Dorsolateral prefrontal cortex (tissue), 120 donors: ENCODE measurements at regions of chr17 and their contacts with region 1.

Region 1: DNA sequence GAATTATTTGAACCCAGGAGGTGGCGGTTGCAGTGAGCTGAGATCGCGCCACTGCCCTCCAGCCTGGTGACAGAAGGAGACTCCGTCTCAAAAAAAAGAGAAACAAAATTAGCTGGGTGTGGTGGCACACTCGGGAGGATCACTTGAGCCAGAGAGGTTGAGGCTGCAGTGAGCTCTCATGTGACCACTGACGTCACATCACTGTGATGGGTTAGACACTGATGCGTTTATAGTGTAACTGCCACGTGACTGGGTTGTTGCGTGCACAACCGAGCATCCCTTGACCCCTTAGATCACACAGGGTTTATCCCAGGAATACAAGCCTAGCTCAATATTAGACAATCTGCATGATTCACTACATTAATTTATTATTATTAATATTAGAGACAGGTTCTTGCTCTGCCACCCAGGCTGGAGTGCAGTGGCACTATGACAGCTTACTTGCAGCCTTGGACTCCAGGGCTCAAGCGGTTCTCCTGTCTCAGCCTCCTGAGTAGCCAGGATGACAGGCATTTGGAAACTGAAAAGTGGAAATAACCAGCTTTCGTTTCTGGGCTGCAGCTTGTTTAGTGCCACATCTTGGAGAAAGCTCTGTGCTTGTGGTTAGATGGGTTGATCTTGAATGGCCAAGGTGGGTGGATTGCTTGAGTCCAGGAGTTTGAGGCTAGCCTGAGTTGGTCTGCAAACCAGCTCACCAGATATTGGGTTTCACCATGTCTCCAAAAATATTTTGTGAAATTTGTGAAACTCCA is 26.4 kb upstream of the ABR start:
- DNase-seq: no peak
- H3K4me3 ChIP-seq: no peak overlapping the region
- H3K27ac ChIP-seq: peak overlapping the region in 2 of 59 donors; percentile 19 to 49
- H3K27me3 ChIP-seq: peaks cover 0 to 9% (median 0%) of the 10 kb centered on the region in 45 donors
- CTCF ChIP-seq: no peak

Region 2: GRCh38 chr17:1108861-1109605 is 97.2 kb before region 1 on chr17:
- intact Hi-C with region 1: no loop called
- DNase-seq: peak in 2 of 10 donors; percentile 24 to 62
- H3K4me3 ChIP-seq: peak overlapping the region; percentile 4 to 74 (median 58)
- H3K27ac ChIP-seq: peak overlapping the region in 58 of 59 donors; percentile 33 to 94 (median 84)
- H3K27me3 ChIP-seq: peaks cover 0 to 33% (median 0%) of the 10 kb centered on the region in 45 donors
- CTCF ChIP-seq: no peak

Region 3: DNA sequence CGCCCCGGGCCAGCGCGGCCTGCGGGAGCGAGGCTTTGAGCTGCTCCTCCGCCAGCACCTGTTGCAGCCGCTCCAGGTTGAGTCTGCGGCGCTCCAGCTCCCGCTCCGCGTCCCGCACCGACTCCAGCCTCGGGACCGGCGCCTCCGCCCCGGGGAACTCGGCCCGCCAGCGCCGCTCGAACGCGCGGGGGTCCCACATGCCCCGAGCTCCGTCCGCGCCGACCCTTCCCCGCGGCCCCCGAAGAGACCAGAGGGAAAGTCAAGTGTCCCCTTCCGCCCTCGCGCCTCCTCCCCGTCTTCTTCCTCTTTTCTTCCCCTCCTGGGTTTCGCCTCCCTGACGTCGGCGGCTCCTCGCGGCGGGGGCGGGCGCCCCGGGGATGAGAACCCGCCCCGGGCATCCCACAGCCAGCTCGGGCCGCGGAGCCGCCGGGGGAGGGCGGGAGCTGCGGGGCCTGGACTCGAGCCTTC is 23.3 kb after region 1 on chr17:
- intact Hi-C with region 1: loop called in 1 of 2 experiments (anchors 2 kb)
- DNase-seq: peak in 4 of 10 donors; percentile 16 to 53 (median 43)
- H3K4me3 ChIP-seq: peak overlapping the region in 58 of 59 donors; percentile 16 to 63 (median 48)
- H3K27ac ChIP-seq: peak overlapping the region in 21 of 59 donors; percentile 1 to 73 (median 46)
- H3K27me3 ChIP-seq: peaks cover 0 to 69% (median 37%) of the 10 kb centered on the region in 45 donors
- CTCF ChIP-seq: no peak

Region 4: GRCh38 chr17:1882836-1883235 is 676.6 kb after region 1 on chr17:
- intact Hi-C with region 1: no loop called
- DNase-seq: peak in 2 of 10 donors; percentile 35 to 42
- H3K4me3 ChIP-seq: no peak overlapping the region
- H3K27ac ChIP-seq: no peak overlapping the region
- H3K27me3 ChIP-seq: no peaks in the 10 kb centered on the region
- CTCF ChIP-seq: peak; percentile 29 to 71 (median 56)